Common myeloid progenitor, CD34-positive (primary cell): ENCODE measurements at regions of chr1 and their contacts with region 1.

Region 1: GRCh38 chr1:67214420-67215174 is 48.3 kb downstream of the IL23R start:
- DNase-seq: peak; percentile 45 to 73 (median 66)
- H3K4me3 ChIP-seq: no peak overlapping the region
- H3K27ac ChIP-seq: no peak overlapping the region
- H3K4me1 ChIP-seq: no peaks in the 10 kb centered on the region
- H3K27me3 ChIP-seq: no peaks in the 10 kb centered on the region

Region 2: GRCh38 chr1:67005068-67005467 is 209.5 kb before region 1 on chr1:
- CTCF ChIA-PET with region 1: interaction called, 10 read pairs
- POLR2A ChIA-PET with region 1: no interaction called
- DNase-seq: no peak
- H3K4me3 ChIP-seq: no peak overlapping the region
- H3K27ac ChIP-seq: no peak overlapping the region
- H3K4me1 ChIP-seq: peaks cover 2 to 10% (median 7%) of the 10 kb centered on the region in 4 experiments
- H3K27me3 ChIP-seq: no peaks in the 10 kb centered on the region

Region 3: DNA sequence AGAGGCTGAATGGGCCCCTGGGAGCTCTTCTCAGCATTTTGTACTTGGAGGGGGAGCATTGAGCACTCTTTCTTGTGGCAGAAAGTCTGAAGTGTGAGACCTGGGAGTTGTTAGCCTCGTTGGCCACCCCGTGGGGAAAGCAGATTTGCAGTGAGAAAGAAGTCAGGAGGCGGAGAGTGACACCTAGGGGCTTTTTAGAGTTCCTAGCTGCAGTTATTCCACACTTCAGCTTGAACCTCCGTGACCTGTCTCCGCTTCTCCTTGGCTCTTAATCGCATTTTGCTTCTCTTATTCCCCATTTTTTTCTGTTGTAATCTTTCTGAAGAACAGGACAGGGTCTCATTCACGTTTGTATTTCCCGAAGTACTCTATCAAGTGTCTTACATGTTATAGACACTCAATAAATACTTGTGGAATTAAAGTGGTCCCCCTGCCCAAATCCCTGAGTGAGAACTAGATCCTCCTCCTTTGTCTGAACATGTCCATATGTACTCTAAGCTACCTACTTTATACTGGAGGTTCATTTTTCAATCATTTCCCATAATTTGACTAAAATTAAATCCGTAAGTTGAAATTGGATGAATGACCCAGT is 65.3 kb before region 1 on chr1:
- CTCF ChIA-PET with region 1: interaction called, 47 read pairs
- POLR2A ChIA-PET with region 1: no interaction called
- DNase-seq: peak; percentile 82 to 92 (median 91)
- H3K4me3 ChIP-seq: no peak overlapping the region
- H3K27ac ChIP-seq: no peak overlapping the region
- H3K4me1 ChIP-seq: peaks cover 0 to 7% (median 4%) of the 10 kb centered on the region in 4 experiments
- H3K27me3 ChIP-seq: peaks cover 0 to 10% (median 0%) of the 10 kb centered on the region in 5 experiments

Region 4: GRCh38 chr1:67204298-67204980 is 10.2 kb before region 1 on chr1:
- CTCF ChIA-PET with region 1: interaction called, 15 read pairs
- POLR2A ChIA-PET with region 1: no interaction called
- DNase-seq: no peak
- H3K4me3 ChIP-seq: no peak overlapping the region
- H3K27ac ChIP-seq: no peak overlapping the region
- H3K4me1 ChIP-seq: no peaks in the 10 kb centered on the region
- H3K27me3 ChIP-seq: no peaks in the 10 kb centered on the region

Region 5: GRCh38 chr1:67404212-67404620 is 189.6 kb after region 1 on chr1:
- CTCF ChIA-PET with region 1: no interaction called
- POLR2A ChIA-PET with region 1: no interaction called
- DNase-seq: no peak
- H3K4me3 ChIP-seq: no peak overlapping the region
- H3K27ac ChIP-seq: no peak overlapping the region
- H3K4me1 ChIP-seq: no peaks in the 10 kb centered on the region
- H3K27me3 ChIP-seq: no peaks in the 10 kb centered on the region

Region 6: GRCh38 chr1:67489643-67490042 is 275.0 kb after region 1 on chr1:
- CTCF ChIA-PET with region 1: interaction called, 36 read pairs
- POLR2A ChIA-PET with region 1: no interaction called
- DNase-seq: peak; percentile 53 to 70 (median 69)
- H3K4me3 ChIP-seq: no peak overlapping the region
- H3K27ac ChIP-seq: no peak overlapping the region
- H3K4me1 ChIP-seq: no peaks in the 10 kb centered on the region
- H3K27me3 ChIP-seq: no peaks in the 10 kb centered on the region

Region 7: GRCh38 chr1:67608661-67609571 is 394.3 kb after region 1 on chr1:
- CTCF ChIA-PET with region 1: no interaction called
- POLR2A ChIA-PET with region 1: no interaction called
- DNase-seq: no peak
- H3K4me3 ChIP-seq: no peak overlapping the region
- H3K27ac ChIP-seq: no peak overlapping the region
- H3K4me1 ChIP-seq: peaks cover 0 to 3% (median 0%) of the 10 kb centered on the region in 4 experiments
- H3K27me3 ChIP-seq: no peaks in the 10 kb centered on the region